ENCODE measurements at regions of chr14 and their contacts with region 1.

Region 1: DNA sequence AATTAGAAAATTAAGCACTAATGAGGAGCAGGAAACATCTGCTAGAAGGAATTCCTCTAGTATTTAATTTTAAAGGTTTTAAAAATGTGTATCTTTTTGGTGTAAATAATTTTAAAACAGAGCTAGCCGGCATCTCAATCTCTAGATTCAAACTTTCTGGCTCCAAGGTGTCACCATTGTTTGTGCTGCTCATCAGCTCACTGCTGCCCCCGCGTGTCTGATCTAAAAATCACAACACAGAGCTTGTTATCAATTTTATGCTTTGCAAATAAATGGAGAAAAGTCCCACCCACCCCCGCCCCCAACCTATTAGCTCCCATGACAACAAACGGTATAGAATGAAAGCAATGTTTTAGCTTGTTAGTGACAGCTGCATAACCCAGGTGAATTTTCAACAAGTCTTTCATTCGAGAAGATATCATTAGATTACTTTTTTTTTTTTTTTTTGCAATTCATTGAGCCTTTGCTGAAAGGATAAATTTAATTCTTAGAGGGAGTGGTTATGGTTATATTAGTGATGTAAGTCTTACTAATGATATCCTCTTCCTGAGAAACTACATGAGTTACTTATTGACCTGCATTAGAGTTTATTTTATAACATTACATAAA is 11.3 kb upstream of the ABHD12B start:
- DNase-seq: peak; percentile 96
- H3K4me3 ChIP-seq: peak overlapping the region; percentile 45 to 71 (median 63)
- H3K27ac ChIP-seq: peak overlapping the region; percentile 45 to 78 (median 69)
- H3K4me1 ChIP-seq: peaks cover 7 to 9% (median 7%) of the 10 kb centered on the region in 4 donors
- H3K27me3 ChIP-seq: no peaks in the 10 kb centered on the region
- CTCF ChIP-seq: peak; percentile 63 to 81 (median 81)
- EP300 ChIP-seq: no peak
- POLR2A ChIP-seq: no peak

Region 2: GRCh38 chr14:50599700-50600444 is 260.7 kb before region 1 on chr14:
- intact Hi-C with region 1: loop called (anchors 10 kb)
- DNase-seq: no peak
- H3K4me3 ChIP-seq: no peak overlapping the region
- H3K27ac ChIP-seq: no peak overlapping the region
- H3K4me1 ChIP-seq: no peaks in the 10 kb centered on the region
- H3K27me3 ChIP-seq: no peaks in the 10 kb centered on the region
- CTCF ChIP-seq: peak; percentile 47 to 57 (median 48)
- EP300 ChIP-seq: no peak
- POLR2A ChIP-seq: no peak

Region 3: DNA sequence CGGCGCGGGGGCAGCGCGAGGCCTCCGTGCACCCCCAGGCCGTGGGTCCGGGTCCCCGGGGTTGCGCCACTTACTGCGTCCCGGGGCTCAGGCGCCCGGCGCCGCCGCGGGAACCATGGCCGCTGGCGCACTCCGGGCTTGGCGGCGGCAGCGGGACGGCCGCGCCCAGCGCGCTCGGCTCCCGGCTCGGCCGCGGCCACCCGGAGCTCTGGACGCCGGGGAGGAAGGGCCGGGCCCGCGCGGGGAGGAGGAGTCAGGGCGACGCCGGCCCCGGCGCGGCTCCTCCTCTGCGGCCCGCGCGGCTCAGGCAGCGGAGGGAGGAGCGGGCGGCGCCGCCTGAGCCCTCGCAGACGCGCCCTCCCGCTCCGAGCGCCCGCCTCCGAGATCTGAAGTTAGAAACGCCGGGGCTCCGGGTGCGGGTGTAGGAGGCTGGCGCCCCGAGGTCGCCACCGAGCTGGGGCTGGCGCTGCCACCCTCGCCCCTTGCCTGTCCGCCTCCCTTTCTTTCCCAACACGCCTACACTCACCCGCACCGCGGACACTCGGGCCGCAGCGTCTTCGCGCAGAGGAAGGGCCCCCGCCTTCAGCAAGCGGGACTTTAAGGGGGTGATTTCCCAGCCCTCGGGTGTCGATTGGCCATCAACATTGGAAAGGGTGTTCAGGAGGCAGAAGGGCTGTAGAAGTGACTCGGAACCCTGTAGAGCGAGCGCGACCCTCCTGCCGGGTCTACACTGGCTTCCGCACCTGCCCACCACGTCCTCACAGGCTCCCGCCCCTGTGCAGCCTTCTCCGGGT is 29.5 kb before region 1 on chr14 and contains the start of gene NIN:
- intact Hi-C with region 1: loop called (anchors 5 kb)
- DNase-seq: peak; percentile 91
- H3K4me3 ChIP-seq: peak within 1 kb of the TSS; percentile 90 to 96 (median 94)
- H3K27ac ChIP-seq: peak within 1 kb of the TSS; percentile 91 to 94 (median 92)
- H3K4me1 ChIP-seq: peaks cover 12 to 34% (median 28%) of the 10 kb centered on the region in 4 donors
- H3K27me3 ChIP-seq: no peaks in the 10 kb centered on the region
- CTCF ChIP-seq: no peak
- EP300 ChIP-seq: no peak
- POLR2A ChIP-seq: no peak
- total RNA-seq, gene NIN: 26.2 to 38.8 (median 34.1) TPM

Measured in esophagus muscularis mucosa (tissue), 4 donors.